G401 (cell line): ENCODE measurements at regions of chr16 and their contacts with region 1.

Region 1: GRCh38 chr16:57882792-57883191 is 80.5 kb upstream of the KIFC3 start:
- DNase-seq: no peak

Region 2: DNA sequence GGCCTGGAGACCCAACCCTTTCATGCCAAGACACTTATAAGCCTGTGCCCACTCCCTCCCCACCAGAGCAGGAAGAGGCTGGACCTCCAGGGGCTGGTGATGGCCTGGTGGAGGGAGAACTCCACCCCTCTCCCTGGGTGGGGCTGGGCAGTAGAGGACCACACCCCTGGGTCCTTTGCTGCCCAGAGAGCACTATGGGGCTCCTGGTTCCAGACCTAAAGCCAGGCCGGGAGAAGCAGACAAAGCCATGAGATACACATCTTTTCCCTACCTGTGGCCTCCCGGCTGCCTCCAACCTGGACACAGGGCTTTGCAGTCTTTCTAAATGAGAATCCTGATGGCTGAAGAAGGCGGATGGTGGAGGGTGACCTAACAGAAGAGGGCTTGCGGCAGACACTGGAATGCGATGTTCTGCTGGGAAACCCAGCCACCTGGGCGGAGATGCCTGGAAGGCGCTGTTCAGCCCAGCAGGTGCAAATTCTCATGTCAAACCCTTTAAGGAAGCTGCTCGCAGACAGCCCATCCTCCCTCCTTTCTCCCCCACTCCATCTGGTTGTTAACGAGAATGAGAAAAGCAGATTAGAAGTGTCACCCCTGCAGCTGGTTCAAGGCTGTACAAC is 36.6 kb before region 1 on chr16:
- in situ Hi-C with region 1: no loop called
- DNase-seq: no peak

Region 3: DNA sequence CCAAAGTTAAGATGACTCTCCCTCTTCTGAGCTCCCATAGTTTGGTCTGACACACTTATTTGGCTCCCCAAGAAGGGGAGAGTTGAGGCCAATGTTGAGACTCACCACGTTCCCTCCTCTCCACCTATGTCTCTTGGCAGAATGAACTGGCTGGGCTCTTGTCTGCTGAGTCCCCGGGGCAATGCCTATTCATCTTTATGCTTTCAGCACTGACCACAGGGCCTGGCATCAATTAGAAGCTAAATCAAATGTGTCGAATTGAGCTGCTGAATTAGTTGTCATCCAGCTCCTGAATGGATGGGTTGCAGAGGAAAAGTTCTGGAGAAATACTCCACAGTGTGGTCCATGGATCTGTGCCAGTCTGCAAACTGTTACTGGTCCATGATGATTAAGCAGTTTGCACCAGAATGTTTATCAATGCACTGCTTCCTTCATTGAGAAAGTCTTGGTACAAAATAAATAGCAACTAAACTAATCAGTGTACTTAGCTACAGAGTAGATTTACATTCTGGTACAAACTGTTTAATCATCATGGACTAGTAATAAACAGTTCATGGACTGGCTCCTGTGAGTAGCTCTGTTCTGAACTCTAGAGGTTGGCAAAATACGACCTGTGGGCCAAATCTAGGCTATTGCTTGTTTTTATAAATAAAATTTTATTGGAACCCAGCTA is 83.5 kb after region 1 on chr16:
- in situ Hi-C with region 1: no loop called
- DNase-seq: peak; percentile 2

Region 4: GRCh38 chr16:57984331-57985203 is 101.8 kb after region 1 on chr16:
- in situ Hi-C with region 1: loop called (anchors 5 kb)
- DNase-seq: peak; percentile 11